ENCODE measurements at regions of chr12 and their contacts with region 1.

Region 1: DNA sequence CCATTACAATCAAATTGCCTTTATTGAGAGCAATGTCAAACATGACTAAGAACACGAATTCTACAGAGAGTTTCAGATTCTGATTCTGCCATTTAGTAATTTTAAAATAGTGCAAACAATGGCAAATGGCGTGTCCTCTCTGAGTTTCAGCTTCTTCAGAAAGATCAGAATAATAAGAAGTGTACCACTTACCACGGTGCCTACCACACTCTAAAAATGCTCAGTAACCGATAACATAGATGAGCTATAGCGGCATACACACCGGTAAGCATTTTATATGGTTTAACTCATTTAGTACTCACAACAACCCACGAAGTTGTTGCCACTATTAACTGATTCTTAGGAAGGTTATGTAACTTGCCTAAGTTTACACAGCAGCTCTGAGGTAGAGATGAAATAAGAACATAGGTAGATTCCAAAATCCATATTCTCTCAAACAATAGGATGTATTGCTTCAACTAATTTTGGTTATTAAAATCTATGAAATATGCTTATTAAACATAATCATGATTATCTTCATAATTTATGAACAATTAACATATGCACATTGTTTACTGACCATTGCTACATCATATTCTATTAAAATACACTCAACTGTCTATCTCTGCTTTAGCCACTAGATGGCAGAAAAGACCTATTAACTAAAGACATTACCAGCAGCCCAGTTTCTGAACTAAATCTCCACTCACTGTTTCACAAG is 38.3 kb downstream of the SLC6A15 start:
- DNase-seq: no peak
- H3K4me3 Mint-ChIP-seq: no peak overlapping the region
- H3K27ac Mint-ChIP-seq: no peak overlapping the region
- H3K4me1 Mint-ChIP-seq: no peaks in the 10 kb centered on the region
- H3K27me3 Mint-ChIP-seq: no peaks in the 10 kb centered on the region

Region 2: GRCh38 chr12:85029456-85029855 is 155.2 kb after region 1 on chr12:
- intact Hi-C with region 1: loop called (anchors 1 kb)
- DNase-seq: no peak
- H3K4me3 Mint-ChIP-seq: no peak overlapping the region
- H3K27ac Mint-ChIP-seq: no peak overlapping the region
- H3K4me1 Mint-ChIP-seq: no peaks in the 10 kb centered on the region
- H3K27me3 Mint-ChIP-seq: no peaks in the 10 kb centered on the region

Region 3: DNA sequence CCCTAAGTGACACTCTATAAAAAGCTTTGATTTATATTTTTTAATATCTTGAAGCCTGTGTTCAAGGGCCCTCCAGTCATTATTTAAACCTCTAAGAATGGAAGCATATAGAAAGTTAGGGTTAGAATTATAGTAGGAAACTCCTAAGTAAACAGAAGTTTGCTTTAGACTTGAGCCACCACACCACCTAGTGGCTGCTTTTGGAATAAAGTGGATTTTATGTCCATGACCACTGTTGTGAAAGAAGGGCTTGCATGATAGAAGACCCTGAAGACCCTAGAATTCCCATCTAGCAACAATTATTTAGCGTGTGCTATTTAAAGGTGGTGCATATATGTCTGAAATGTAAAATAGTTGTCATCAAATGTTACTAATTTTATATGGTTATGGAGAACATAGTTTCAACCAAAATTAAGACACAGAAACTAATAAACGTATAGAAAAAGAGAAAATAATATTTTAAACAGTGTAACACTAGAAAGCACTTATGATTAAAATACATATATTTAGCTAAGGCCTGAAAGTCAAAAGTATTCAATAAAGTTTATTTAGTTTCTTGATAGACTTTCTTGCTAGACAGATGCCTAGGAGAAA is 183.2 kb after region 1 on chr12:
- intact Hi-C with region 1: loop called (anchors 1 kb)
- DNase-seq: no peak
- H3K4me3 Mint-ChIP-seq: no peak overlapping the region
- H3K27ac Mint-ChIP-seq: no peak overlapping the region
- H3K4me1 Mint-ChIP-seq: no peaks in the 10 kb centered on the region
- H3K27me3 Mint-ChIP-seq: no peaks in the 10 kb centered on the region